Body of pancreas (tissue), 4 donors: ENCODE measurements at regions of chr10 and their contacts with region 1.

Region 1: DNA sequence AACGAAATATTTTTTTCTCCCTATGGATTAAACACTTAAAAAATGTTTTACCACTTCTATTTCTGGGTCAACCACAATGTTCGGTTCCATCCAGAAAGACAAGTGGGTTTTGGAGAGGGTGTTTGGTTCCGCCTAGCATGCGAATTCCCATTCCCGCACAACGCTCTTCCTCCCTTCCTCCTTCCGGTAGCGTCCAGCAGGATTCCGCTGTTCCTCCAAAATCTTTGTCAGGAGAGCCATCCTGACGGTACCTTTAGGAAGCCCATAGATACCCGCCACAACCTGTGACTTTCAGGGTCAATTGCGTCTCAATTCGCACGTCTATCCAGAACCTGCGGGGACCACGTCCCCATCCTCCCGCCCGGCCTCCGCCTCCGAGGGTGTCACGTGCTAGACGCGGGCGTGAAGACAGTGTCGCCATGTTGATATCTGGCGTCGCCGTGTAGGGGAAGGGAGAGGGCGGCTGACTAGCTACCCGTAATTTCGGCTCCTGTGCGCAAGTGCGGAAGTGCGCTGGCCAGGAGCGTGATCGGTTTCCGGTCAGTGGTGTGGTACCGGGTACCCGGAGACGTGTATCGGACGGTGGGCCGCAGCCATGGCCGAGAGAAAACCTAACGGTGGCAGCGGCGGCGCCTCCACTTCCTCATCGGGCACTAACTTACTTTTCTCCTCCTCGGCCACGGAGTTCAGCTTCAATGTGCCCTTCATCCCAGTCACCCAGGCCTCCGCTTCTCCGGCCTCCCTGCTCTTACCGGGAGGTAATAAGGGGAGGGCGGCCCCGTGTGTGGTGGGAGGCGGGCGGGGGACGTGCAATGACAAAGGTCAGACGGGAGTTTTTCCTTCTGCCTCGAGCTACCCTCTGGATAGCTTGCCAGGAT is at the start of gene SEC23IP:
- DNase-seq: peak; percentile 95 to 97 (median 96)
- ATAC-seq: peak; percentile 95
- H3K4me3 ChIP-seq: peak within 1 kb of the TSS; percentile 82 to 84
- H3K27ac ChIP-seq: peak within 1 kb of the TSS; percentile 67 to 86 (median 78)
- H3K4me1 ChIP-seq: peaks cover 48% of the 10 kb centered on the region
- H3K27me3 ChIP-seq: no peaks in the 10 kb centered on the region
- CTCF ChIP-seq: peak in 3 of 7 experiments; percentile 20 to 37 (median 29)
- POLR2A ChIP-seq: peak; percentile 72 to 92 (median 90)
- total RNA-seq, gene SEC23IP: 10.1 to 24.1 TPM

Region 2: DNA sequence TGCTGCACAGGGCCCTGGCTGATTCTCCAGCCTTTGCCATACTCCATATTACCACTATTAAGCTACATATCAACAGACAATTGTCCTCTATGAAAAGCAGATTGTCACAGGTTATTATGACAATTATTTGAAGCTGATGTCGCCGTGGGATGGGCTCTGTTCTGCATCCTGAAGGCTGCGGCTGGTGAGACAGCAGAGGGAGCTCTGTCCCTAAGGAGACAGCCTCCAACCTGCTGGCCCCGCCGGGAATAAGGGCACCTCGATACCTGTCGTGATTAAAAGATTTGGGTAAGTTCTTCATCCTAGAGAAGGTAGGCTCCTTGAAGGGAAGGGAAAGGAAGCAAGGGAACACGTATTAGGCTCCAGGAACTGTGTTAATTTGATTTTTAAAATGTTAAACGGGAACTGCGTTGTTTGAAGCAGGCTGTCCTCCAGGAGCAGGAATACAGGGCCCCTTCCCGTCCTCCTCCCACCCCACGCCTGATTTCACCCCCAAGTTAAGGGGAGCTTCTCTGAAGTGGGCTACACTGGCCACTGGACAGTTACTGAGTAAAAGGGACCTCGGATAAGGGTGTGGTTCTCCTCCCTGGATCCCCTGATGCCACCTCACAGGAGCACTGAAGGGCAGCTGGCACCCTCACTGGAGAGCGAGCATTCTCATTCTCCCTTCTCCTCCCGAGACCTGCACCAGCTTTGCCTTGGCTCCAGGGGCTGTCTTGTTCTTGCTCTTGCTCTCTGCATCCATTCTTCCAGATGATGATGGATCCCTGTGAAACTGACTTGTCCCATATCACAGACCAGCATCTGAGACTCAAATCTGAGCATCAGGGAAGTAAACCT is 283.9 kb before region 1 on chr10:
- intact Hi-C with region 1: loop called (anchors 10 kb)
- DNase-seq: peak; percentile 40 to 65 (median 54)
- ATAC-seq: peak; percentile 65
- H3K4me3 ChIP-seq: no peak overlapping the region
- H3K27ac ChIP-seq: no peak overlapping the region
- H3K4me1 ChIP-seq: no peaks in the 10 kb centered on the region
- H3K27me3 ChIP-seq: no peaks in the 10 kb centered on the region
- CTCF ChIP-seq: peak; percentile 39 to 60 (median 55)
- POLR2A ChIP-seq: no peak